A673 (cell line): ENCODE measurements at regions of chr10 and their contacts with region 1.

Region 1: DNA sequence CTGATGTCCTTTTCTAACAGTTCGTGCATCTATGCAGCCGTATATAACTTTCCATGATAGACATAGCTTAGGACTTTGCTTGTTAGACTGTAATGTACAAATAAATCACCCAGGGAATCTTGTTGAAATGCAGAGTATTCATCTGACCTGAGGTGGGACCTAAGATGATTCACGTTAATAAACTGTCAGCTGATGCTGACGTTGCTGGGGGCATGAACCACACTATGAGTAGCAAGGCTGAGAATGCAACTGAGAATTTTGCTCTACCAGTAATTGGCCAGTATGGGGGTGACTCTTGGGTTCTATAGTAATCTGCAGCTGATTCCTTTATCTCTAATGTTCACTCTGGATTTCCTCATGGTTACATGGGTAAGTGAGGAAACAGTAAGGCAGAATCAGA is 130.1 kb upstream of the MALRD1 start:
- DNase-seq: peak; percentile 70
- H3K4me3 ChIP-seq: no peak overlapping the region
- H3K27ac ChIP-seq: peak overlapping the region; percentile 89
- H3K4me1 ChIP-seq: peaks cover 18% of the 10 kb centered on the region
- H3K27me3 ChIP-seq: no peaks in the 10 kb centered on the region
- CTCF ChIP-seq: no peak

Region 2: DNA sequence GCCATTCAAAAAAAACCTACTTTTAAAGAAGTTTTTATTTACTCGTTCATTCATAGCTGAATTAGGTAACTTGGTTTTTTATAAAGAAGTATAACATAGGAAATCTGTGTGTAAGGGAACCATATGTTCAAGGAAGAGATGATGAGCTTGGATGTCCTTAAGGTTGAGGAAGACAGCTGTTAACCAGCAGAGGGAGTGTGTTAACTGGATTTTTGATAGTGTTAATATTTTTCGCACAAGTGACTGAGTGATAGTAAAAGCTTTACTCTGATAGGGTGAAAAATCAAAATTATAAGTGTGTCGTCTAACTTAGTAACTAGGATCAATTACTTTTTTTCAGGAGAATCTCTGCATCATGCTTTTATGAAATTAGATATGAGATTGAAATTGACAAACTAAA is 124.6 kb before region 1 on chr10:
- CTCF ChIA-PET with region 1: no interaction called
- POLR2A ChIA-PET with region 1: no interaction called
- intact Hi-C with region 1: loop called (anchors 5 kb)
- DNase-seq: peak; percentile 71
- H3K4me3 ChIP-seq: no peak overlapping the region
- H3K27ac ChIP-seq: no peak overlapping the region
- H3K4me1 ChIP-seq: peaks cover 9% of the 10 kb centered on the region
- H3K27me3 ChIP-seq: no peaks in the 10 kb centered on the region
- CTCF ChIP-seq: peak; percentile 76

Region 3: GRCh38 chr10:19041171-19041570 is 122.6 kb after region 1 on chr10:
- CTCF ChIA-PET with region 1: interaction called, 14 read pairs
- POLR2A ChIA-PET with region 1: no interaction called
- intact Hi-C with region 1: loop called (anchors 5 kb)
- DNase-seq: peak; percentile 68
- H3K4me3 ChIP-seq: no peak overlapping the region
- H3K27ac ChIP-seq: no peak overlapping the region
- H3K4me1 ChIP-seq: peaks cover 23% of the 10 kb centered on the region
- H3K27me3 ChIP-seq: no peaks in the 10 kb centered on the region
- CTCF ChIP-seq: no peak

Region 4: DNA sequence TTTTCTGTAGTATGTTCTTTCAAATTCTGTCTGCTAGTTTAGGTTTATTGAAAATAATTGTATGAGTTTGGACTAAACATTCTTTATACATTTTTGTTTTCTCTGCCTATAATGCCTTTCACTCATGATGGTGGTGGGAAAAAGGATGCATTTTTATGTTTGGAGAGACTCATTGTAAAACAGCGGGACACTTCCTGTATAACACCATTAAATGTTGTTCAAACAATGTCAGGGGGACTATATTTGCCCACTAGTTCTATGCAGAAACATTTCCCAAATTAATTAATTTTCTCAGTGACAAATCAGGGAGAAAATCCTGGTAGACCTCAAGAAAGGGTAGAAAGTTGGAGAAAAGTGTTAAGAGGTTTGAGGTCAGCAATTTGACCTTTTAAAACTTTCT is 337.8 kb after region 1 on chr10:
- CTCF ChIA-PET with region 1: no interaction called
- POLR2A ChIA-PET with region 1: interaction called, 4 read pairs
- intact Hi-C with region 1: loop called (anchors 5 kb)
- DNase-seq: peak; percentile 95
- H3K4me3 ChIP-seq: no peak overlapping the region
- H3K27ac ChIP-seq: peak overlapping the region; percentile 18
- H3K4me1 ChIP-seq: peaks cover 19% of the 10 kb centered on the region
- H3K27me3 ChIP-seq: no peaks in the 10 kb centered on the region
- CTCF ChIP-seq: no peak

Region 5: DNA sequence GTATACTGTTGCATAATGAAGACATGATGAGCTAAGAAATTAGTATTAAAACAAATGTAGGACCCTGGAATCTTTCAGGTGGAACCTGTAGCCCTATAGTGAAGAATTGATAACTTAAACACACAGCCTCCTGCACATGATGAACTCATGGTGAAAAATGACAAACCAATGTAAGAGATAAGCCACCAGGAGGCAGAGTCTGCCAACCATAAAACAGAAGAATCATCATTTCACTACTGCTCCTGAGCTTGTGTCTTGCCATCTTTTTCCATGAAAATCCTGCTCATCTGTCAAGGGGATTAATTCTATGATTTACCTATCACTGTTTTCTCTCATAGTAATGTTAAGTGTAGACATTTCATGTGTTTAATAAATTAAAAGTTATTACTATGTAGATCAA is 494.0 kb after region 1 on chr10:
- CTCF ChIA-PET with region 1: no interaction called
- POLR2A ChIA-PET with region 1: no interaction called
- intact Hi-C with region 1: loop called (anchors 5 kb)
- DNase-seq: peak; percentile 72
- H3K4me3 ChIP-seq: no peak overlapping the region
- H3K27ac ChIP-seq: no peak overlapping the region
- H3K4me1 ChIP-seq: no peaks in the 10 kb centered on the region
- H3K27me3 ChIP-seq: no peaks in the 10 kb centered on the region
- CTCF ChIP-seq: peak; percentile 67

Region 6: GRCh38 chr10:19839552-19839951 is 921.0 kb after region 1 on chr10:
- CTCF ChIA-PET with region 1: no interaction called
- POLR2A ChIA-PET with region 1: interaction called, 12 read pairs
- intact Hi-C with region 1: no loop called
- DNase-seq: peak; percentile 54
- H3K4me3 ChIP-seq: no peak overlapping the region
- H3K27ac ChIP-seq: peak overlapping the region; percentile 22
- H3K4me1 ChIP-seq: peaks cover 77% of the 10 kb centered on the region
- H3K27me3 ChIP-seq: no peaks in the 10 kb centered on the region
- CTCF ChIP-seq: no peak